Calu3 (cell line): ENCODE measurements at regions of chr18 and their contacts with region 1.

Region 1: DNA sequence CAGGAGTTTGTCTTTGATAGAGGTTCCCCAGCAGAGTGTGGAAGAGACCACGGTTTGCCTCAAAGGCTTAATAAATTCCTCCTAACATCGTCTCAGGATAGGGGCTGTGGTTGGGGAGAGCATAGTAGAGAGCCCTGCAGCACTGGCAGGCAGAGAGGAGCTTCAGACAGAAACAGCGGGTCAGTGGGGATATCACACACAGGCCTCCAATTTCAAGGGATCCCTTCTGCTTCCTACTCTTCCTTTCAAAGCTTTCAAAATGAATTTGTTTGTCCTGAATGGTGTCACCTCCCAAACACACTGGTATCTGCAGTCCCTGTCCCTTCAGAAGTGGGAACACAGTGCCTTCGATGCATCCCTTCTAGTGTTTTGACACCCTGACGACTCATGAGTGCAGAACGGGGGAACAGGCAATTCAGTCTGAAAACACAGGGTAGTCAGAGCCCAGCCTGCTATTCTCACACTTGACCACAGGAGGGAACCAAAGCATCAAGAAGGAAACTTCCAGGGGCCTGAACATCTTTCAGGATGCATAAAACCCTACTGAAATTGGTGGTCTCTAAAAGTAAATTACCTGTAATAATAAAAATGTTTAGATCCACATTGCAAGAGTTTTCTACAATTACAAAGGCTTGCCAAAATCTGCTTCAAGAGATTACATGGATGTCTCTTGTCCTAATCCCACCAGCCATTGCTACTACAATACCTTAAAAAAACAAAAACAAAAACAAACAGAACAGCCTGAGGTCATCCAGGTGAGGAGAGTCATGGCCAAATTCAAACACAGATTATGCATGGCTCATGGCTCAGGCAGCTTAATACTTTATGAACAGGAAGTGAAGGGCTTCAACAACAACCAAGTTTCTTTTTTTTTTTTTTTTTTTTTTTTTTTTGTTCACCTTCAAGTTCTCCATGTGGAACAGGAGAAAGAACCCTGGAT is 49.8 kb downstream of the SLC14A2 start:
- DNase-seq: peak; percentile 63
- H3K4me3 Mint-ChIP-seq: no peak overlapping the region
- H3K27ac Mint-ChIP-seq: no peak overlapping the region
- H3K4me1 Mint-ChIP-seq: peaks cover 16% of the 10 kb centered on the region
- H3K27me3 Mint-ChIP-seq: peaks cover 68% of the 10 kb centered on the region
- CTCF ChIP-seq: peak; percentile 74

Region 2: GRCh38 chr18:45722899-45723298 is 57.8 kb after region 1 on chr18:
- CTCF ChIA-PET with region 1: no interaction called
- intact Hi-C with region 1: no loop called
- DNase-seq: peak; percentile 92
- H3K4me3 Mint-ChIP-seq: no peak overlapping the region
- H3K27ac Mint-ChIP-seq: no peak overlapping the region
- H3K4me1 Mint-ChIP-seq: peaks cover 15% of the 10 kb centered on the region
- H3K27me3 Mint-ChIP-seq: peaks cover 14% of the 10 kb centered on the region
- CTCF ChIP-seq: peak; percentile 87

Region 3: DNA sequence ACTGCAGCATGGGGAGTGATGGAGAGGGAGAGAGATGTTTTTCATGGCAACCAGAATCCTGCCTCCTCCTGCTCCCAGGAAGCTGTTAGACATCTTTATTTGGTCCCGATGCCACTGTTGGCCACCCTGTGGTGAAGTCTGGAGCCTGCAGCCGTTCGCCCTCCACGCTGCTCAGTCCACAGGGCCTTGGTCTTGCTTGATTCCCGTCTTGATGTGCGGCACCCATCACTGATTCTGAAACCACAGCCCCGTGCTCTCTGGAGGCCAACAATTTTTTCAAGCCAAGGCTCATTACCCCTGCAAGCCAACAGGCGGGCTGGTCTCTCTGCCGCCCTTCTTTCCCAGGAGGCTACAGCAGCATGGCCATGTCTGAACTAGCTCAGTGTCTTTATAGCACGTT is 184.9 kb after region 1 on chr18:
- CTCF ChIA-PET with region 1: no interaction called
- intact Hi-C with region 1: no loop called
- DNase-seq: peak; percentile 39
- H3K4me3 Mint-ChIP-seq: no peak overlapping the region
- H3K27ac Mint-ChIP-seq: no peak overlapping the region
- H3K4me1 Mint-ChIP-seq: peaks cover 11% of the 10 kb centered on the region
- H3K27me3 Mint-ChIP-seq: no peaks in the 10 kb centered on the region
- CTCF ChIP-seq: no peak

Region 4: DNA sequence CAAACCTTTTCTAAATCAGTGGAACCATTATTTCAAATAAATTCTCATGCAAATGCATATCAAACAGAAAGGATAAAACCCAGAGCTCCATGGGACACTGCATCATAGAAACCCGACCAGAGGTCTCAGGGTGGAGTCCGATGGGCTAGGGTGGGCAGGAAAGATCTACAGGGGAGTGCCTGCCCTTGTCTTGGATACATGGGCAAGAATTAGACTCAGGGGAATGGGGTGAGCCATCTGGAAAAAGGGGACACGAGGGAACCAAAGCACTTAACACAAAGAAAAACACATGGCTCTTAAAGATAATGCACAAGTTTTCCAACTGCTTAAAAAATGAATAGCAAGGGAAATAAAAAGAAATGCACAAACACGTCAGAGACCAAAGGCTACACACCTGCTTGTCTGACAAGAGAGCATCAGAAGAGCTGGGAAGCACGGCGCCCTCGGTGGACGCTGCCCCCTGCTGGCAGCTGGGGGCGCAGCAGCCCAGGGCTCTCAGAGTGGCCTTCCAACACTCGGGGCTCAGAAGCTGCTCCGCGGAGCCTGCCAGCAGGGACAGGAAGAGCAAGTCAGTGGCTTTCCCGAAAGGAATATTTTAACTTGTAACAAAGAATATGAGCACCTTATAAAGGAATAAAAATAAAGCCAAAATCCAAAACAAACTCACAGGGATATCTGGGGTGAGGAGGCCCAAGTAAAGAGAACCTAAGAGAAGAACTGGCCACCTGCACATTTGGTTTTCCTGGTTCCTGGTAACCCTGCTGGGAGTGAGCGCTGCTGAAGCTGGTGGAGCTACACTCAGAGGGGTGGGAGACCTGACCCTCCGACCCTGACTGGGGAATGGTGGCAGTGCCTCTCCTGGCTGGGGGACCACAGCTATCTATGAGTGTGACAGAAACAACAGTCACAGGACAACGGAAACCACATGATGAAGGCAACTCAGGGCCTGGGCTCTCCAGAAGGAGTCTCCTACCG is 214.9 kb after region 1 on chr18:
- CTCF ChIA-PET with region 1: interaction called, 10 read pairs
- intact Hi-C with region 1: loop called (anchors 1 kb)
- DNase-seq: peak; percentile 78
- H3K4me3 Mint-ChIP-seq: no peak overlapping the region
- H3K27ac Mint-ChIP-seq: no peak overlapping the region
- H3K4me1 Mint-ChIP-seq: peaks cover 11% of the 10 kb centered on the region
- H3K27me3 Mint-ChIP-seq: no peaks in the 10 kb centered on the region
- CTCF ChIP-seq: peak; percentile 98

Region 5: DNA sequence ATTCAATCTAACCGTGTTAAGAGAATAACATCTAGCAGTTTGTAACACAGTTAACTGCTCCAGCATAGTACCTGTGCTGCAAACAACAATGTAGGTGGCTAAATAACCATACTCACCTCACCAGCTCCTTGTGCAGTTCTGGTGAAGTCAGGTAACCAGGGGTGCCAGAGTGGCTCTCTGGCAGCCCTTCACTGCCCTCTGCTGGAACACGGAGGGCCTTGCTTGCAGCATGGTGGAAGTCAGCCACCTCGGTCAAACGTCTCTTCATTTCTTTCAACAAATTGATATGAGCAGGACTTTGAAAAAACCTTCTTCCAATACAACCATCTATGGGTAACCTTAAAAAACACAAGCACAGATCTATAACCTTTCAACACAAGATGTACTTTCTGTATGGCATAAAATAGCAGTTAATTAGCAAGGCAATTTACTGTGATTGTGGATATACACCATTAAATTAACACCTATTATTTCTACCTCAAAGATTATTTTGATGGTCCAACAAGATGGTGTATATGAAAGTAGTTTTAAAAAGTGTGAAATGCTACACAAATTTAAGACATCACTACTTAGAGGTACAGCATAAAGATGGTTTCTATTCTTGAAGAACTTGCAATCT is 245.4 kb after region 1 on chr18:
- CTCF ChIA-PET with region 1: interaction called, 11 read pairs
- intact Hi-C with region 1: loop called (anchors 2 kb)
- DNase-seq: peak; percentile 69
- H3K4me3 Mint-ChIP-seq: no peak overlapping the region
- H3K27ac Mint-ChIP-seq: no peak overlapping the region
- H3K4me1 Mint-ChIP-seq: no peaks in the 10 kb centered on the region
- H3K27me3 Mint-ChIP-seq: no peaks in the 10 kb centered on the region
- CTCF ChIP-seq: peak; percentile 83

Region 6: GRCh38 chr18:45974088-45974536 is 309.0 kb after region 1 on chr18:
- CTCF ChIA-PET with region 1: no interaction called
- intact Hi-C with region 1: loop called (anchors 1 kb)
- DNase-seq: peak; percentile 62
- H3K4me3 Mint-ChIP-seq: no peak overlapping the region
- H3K27ac Mint-ChIP-seq: no peak overlapping the region
- H3K4me1 Mint-ChIP-seq: peaks cover 21% of the 10 kb centered on the region
- H3K27me3 Mint-ChIP-seq: no peaks in the 10 kb centered on the region
- CTCF ChIP-seq: peak; percentile 68